Ascending aorta (tissue), 2 donors: ENCODE measurements at regions of chr4 and their contacts with region 1.

Region 1: DNA sequence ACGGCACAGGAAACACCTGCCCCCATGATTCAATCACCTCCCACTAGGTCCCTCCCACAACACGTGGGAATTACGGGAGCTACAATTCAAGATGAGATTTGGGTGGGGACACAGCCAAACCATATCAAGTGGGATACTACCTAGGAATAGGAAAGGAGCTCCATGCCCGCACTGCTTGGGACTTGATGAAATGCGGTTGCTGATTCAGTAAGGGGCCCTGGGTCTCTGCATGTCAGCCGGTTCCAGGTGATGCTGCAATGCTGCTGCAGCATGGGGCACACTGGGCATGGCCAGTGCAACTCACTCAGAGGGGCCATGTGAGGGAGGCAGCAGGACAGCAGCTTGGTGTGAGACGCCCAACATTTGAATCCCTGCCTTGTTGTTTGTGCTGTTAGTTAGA is 34.0 kb upstream of the MSX1 start:
- DNase-seq: peak in 1 of 2 donors; percentile 37
- H3K4me3 ChIP-seq: no peak overlapping the region
- H3K27ac ChIP-seq: no peak overlapping the region
- H3K4me1 ChIP-seq: no peaks in the 10 kb centered on the region
- H3K27me3 ChIP-seq: no peaks in the 10 kb centered on the region
- CTCF ChIP-seq: no peak

Region 2: DNA sequence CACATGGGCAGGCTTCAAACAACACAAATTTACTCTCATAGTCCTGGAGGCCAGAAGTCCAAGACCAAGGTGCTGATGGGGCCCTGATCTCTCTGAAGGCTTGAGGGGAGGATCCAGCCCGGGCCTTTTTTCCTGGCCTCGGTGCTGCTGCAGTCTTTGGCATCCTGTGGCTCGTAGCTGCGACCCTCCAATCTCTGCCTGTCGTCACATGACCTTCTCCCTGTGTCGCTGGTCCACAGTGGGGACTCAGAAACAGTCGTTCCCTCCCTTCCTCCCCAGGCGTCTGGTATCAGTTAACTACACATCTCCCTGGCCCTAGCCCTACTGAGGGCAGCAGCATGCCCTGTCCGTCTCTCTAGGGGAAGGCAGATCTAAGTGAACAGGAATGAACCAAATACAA is 14.9 kb after region 1 on chr4:
- intact Hi-C with region 1: loop called (anchors 1 kb)
- DNase-seq: no peak
- H3K4me3 ChIP-seq: no peak overlapping the region
- H3K27ac ChIP-seq: no peak overlapping the region
- H3K4me1 ChIP-seq: no peaks in the 10 kb centered on the region
- H3K27me3 ChIP-seq: no peaks in the 10 kb centered on the region
- CTCF ChIP-seq: no peak

Region 3: GRCh38 chr4:4914059-4914820 is 88.8 kb after region 1 on chr4:
- intact Hi-C with region 1: no loop called
- DNase-seq: no peak
- H3K4me3 ChIP-seq: no peak overlapping the region
- H3K27ac ChIP-seq: no peak overlapping the region
- H3K4me1 ChIP-seq: no peaks in the 10 kb centered on the region
- H3K27me3 ChIP-seq: no peaks in the 10 kb centered on the region
- CTCF ChIP-seq: no peak

Region 4: DNA sequence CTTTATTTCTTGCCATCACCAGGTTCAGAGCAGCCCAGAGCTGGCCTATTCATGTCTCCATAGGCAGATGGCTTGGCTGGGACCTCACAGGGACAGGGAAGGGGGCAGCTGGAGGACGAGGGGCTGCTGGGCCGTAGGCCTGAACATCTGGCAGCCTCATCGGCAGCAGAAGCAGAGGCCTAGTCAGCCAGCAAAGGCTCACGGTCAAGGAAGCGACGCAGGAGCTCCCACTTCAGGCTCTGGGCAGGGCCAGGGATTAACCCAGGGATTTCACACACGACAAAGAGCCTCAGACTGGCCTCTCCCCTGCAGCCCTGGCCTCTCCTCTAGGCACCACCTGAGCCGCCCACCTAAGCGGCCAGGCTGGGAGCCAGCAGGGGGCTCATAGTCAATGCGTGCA is 1703.6 kb after region 1 on chr4:
- intact Hi-C with region 1: no loop called
- DNase-seq: no peak
- H3K4me3 ChIP-seq: no peak overlapping the region
- H3K27ac ChIP-seq: no peak overlapping the region
- H3K4me1 ChIP-seq: no peaks in the 10 kb centered on the region
- H3K27me3 ChIP-seq: no peaks in the 10 kb centered on the region
- CTCF ChIP-seq: no peak